ENCODE measurements at regions of chr3 and their contacts with region 1.

Region 1: DNA sequence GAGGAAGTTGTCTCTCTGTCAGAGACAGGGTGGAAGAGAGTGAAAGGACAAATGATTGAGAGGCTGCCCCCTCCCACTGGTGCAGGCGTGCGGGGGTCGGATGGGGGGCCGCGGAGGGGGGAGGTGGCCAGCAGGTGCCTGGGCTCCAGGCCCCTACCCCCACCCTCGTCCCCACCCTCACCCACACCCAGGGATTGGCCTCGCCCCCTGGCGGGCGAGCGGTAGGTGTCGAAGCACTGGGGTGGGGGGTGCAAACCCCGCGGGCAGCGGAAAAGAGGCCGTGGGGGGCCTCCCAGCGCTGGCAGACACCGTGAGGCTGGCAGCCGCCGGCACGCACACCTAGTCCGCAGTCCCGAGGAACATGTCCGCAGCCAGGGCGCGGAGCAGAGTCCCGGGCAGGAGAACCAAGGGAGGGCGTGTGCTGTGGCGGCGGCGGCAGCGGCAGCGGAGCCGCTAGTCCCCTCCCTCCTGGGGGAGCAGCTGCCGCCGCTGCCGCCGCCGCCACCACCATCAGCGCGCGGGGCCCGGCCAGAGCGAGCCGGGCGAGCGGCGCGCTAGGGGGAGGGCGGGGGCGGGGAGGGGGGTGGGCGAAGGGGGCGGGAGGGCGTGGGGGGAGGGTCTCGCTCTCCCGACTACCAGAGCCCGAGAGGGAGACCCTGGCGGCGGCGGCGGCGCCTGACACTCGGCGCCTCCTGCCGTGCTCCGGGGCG is at the start of gene KAT2B:
- DNase-seq: peak; percentile 76 to 89
- H3K4me3 ChIP-seq: peak within 1 kb of the TSS; percentile 72 to 88
- H3K27ac ChIP-seq: peak within 1 kb of the TSS; percentile 97 to 98
- H3K4me1 ChIP-seq: peaks cover 4 to 42% (median 27%) of the 10 kb centered on the region in 4 donors
- H3K27me3 ChIP-seq: no peaks in the 10 kb centered on the region
- CTCF ChIP-seq: peak; percentile 56 to 83

Region 2: DNA sequence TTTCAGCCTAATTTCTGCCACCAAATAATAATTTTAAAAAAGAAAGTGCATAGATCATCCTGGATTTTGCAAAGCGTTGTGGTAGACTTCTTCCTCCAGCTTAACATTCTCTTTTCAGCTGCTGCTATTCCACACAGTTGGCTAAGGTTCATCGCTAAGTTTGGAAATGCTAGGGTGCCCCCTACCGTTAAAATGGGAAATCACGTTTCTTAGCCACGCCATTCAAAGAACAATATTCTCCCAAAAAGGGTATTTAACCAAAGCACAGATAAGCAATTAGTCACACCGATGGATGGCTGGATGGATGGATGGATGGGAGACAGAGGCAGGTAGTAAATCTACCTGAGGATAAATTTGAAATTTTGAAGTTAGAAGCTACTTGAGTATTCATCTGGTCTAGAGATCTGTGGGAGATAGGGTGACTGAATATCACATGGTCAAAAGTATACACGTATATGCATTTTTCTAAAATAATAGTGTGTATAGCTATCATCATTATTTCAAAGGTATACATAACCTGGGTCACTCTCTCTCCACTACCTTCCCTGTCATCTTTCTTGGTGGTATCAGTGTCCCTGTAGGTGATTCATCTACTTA is 173.1 kb before region 1 on chr3:
- intact Hi-C with region 1: no loop called
- DNase-seq: peak in 1 of 2 donors; percentile 37
- H3K4me3 ChIP-seq: no peak overlapping the region
- H3K27ac ChIP-seq: no peak overlapping the region
- H3K4me1 ChIP-seq: no peaks in the 10 kb centered on the region
- H3K27me3 ChIP-seq: no peaks in the 10 kb centered on the region
- CTCF ChIP-seq: peak; percentile 66 to 77

Region 3: GRCh38 chr3:20096135-20096685 is 56.3 kb after region 1 on chr3:
- intact Hi-C with region 1: loop called (anchors 10 kb)
- DNase-seq: no peak
- H3K4me3 ChIP-seq: no peak overlapping the region
- H3K27ac ChIP-seq: peak overlapping the region in 1 of 2 donors; percentile 54
- H3K4me1 ChIP-seq: peaks cover 0 to 44% (median 22%) of the 10 kb centered on the region in 4 donors
- H3K27me3 ChIP-seq: no peaks in the 10 kb centered on the region
- CTCF ChIP-seq: no peak

Region 4: GRCh38 chr3:20185701-20186598 is 146.0 kb after region 1 on chr3 and contains the start of gene SGO1:
- intact Hi-C with region 1: loop called (anchors 5 kb)
- DNase-seq: peak; percentile 99
- H3K4me3 ChIP-seq: peak within 1 kb of the TSS; percentile 64 to 77
- H3K27ac ChIP-seq: peak within 1 kb of the TSS; percentile 92 to 93
- H3K4me1 ChIP-seq: peaks cover 0 to 16% (median 4%) of the 10 kb centered on the region in 4 donors
- H3K27me3 ChIP-seq: no peaks in the 10 kb centered on the region
- CTCF ChIP-seq: no peak

Region 5: GRCh38 chr3:20225769-20226168 is 185.8 kb after region 1 on chr3:
- intact Hi-C with region 1: no loop called
- DNase-seq: no peak
- H3K4me3 ChIP-seq: no peak overlapping the region
- H3K27ac ChIP-seq: no peak overlapping the region
- H3K4me1 ChIP-seq: no peaks in the 10 kb centered on the region
- H3K27me3 ChIP-seq: no peaks in the 10 kb centered on the region
- CTCF ChIP-seq: peak; percentile 43 to 49

Measured in tibial artery (tissue), 4 donors.